Heart right ventricle (tissue), 16 donors: ENCODE measurements at regions of chr15 and their contacts with region 1.

Region 1: GRCh38 chr15:67076147-67076843 is 10.9 kb downstream of the SMAD3 start:
- DNase-seq: no peak
- ATAC-seq: no peak
- H3K4me3 ChIP-seq: no peak overlapping the region
- H3K27ac ChIP-seq: peak overlapping the region in 1 of 10 donors; percentile 64
- H3K4me1 ChIP-seq: peaks cover 6 to 99% (median 61%) of the 10 kb centered on the region in 9 donors
- H3K27me3 ChIP-seq: no peaks in the 10 kb centered on the region
- CTCF ChIP-seq: no peak

Region 2: GRCh38 chr15:67134067-67134838 is 58.0 kb after region 1 on chr15:
- intact Hi-C with region 1: no loop called
- DNase-seq: peak in 1 of 2 donors; percentile 51
- ATAC-seq: peak; percentile 24 to 77 (median 66)
- H3K4me3 ChIP-seq: peak overlapping the region in 3 of 10 donors; percentile 11 to 17 (median 12)
- H3K27ac ChIP-seq: peak overlapping the region; percentile 63 to 89 (median 80)
- H3K4me1 ChIP-seq: peaks cover 22 to 89% (median 77%) of the 10 kb centered on the region in 9 donors
- H3K27me3 ChIP-seq: no peaks in the 10 kb centered on the region
- CTCF ChIP-seq: no peak

Region 3: GRCh38 chr15:67254238-67255175 is 178.2 kb after region 1 on chr15 and contains the starts of genes AAGAB and IQCH:
- intact Hi-C with region 1: loop called in 1 of 10 experiments (anchors 10 kb)
- DNase-seq: peak; percentile 97 to 99
- ATAC-seq: peak; percentile 99 to 100 (median 100)
- H3K4me3 ChIP-seq: peak within 1 kb of the TSS; percentile 50 to 90 (median 75)
- H3K27ac ChIP-seq: peak within 1 kb of the TSS in 9 of 10 donors; percentile 69 to 90 (median 84)
- H3K4me1 ChIP-seq: peaks cover 0 to 24% (median 14%) of the 10 kb centered on the region in 9 donors
- H3K27me3 ChIP-seq: no peaks in the 10 kb centered on the region
- CTCF ChIP-seq: peak in 4 of 9 donors; percentile 7 to 25 (median 14)
- total RNA-seq, gene AAGAB: 17.4 to 33.4 (median 24.3) TPM
- total RNA-seq, gene IQCH: 0.51 to 2.6 (median 1.3) TPM